ENCODE measurements at regions of chr7 and their contacts with region 1.

Region 1: GRCh38 chr7:98168181-98168905 is 42.9 kb upstream of the BHLHA15 start:
- DNase-seq: peak; percentile 81
- H3K4me3 ChIP-seq: no peak overlapping the region
- H3K27ac ChIP-seq: no peak overlapping the region
- H3K4me1 ChIP-seq: peaks cover 12% of the 10 kb centered on the region
- H3K27me3 ChIP-seq: no peaks in the 10 kb centered on the region
- CTCF ChIP-seq: peak; percentile 56 to 78 (median 72)
- POLR2A ChIP-seq: no peak

Region 2: GRCh38 chr7:98021588-98022351 is 146.6 kb before region 1 on chr7:
- intact Hi-C with region 1: loop called (anchors 5 kb)
- DNase-seq: peak; percentile 92
- H3K4me3 ChIP-seq: no peak overlapping the region
- H3K27ac ChIP-seq: no peak overlapping the region
- H3K4me1 ChIP-seq: no peaks in the 10 kb centered on the region
- H3K27me3 ChIP-seq: no peaks in the 10 kb centered on the region
- CTCF ChIP-seq: peak; percentile 84 to 97 (median 92)
- POLR2A ChIP-seq: no peak

Region 3: DNA sequence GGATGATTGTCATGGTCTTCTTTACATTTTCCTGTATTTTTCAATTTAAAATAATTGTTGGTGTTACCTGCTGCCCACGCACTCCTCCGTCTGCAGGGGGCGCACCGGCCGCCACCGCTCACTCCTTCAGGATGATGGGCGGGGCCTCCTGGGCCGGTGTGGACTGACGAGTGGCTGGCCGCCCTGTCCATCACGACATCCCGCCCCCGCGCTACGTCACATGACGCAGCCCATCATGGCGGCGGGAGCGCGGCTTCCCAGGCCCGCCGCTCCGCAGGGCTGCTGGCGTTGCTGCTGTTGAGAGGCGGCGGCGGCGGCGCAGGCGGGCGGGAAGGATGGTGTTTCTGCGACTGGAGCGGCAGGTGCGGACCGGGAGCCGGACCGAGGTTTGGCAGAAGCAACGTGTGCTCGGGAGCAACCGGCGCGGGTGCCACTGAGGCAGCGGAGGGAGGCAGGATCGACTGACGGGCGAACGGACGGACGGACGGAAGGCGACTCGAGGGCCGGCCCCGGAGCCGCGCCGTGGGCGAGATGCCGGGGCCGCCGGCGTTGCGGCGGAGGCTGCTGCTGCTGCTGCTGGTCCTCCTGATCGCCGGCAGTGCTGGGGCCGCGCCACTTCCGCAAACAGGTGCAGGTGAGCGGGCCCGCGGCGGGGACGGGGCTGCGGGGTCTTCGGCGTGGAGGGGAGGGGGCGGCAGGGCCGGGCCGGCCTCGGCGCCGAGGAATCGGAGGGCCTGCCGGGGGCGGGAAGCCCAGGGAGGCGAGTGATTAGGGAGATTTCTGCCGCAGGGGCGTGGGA is 61.5 kb before region 1 on chr7 and contains the start of gene LMTK2:
- intact Hi-C with region 1: loop called (anchors 10 kb)
- DNase-seq: peak; percentile 98
- H3K4me3 ChIP-seq: peak within 1 kb of the TSS; percentile 99 to 100
- H3K27ac ChIP-seq: peak within 1 kb of the TSS; percentile 86 to 92
- H3K4me1 ChIP-seq: peaks cover 12% of the 10 kb centered on the region
- H3K27me3 ChIP-seq: no peaks in the 10 kb centered on the region
- CTCF ChIP-seq: peak; percentile 93 to 99 (median 97)
- POLR2A ChIP-seq: peak; percentile 87
- total RNA-seq, gene LMTK2: 35.5 to 36.1 TPM